ENCODE measurements at regions of chr4 and their contacts with region 1.

Region 1: GRCh38 chr4:56544573-56545131 is 39.1 kb downstream of the ARL9 start:
- DNase-seq: peak; percentile 69 to 83 (median 78)
- H3K4me3 ChIP-seq: peak overlapping the region; percentile 37 to 42
- H3K4me3 Mint-ChIP-seq: peak overlapping the region; percentile 43 to 77 (median 64)
- H3K27ac ChIP-seq: no peak overlapping the region
- H3K27ac Mint-ChIP-seq: peak overlapping the region in 6 of 7 donors; percentile 7 to 79 (median 22)
- H3K4me1 ChIP-seq: peaks cover 13% of the 10 kb centered on the region
- H3K4me1 Mint-ChIP-seq: peaks cover 8 to 19% (median 8%) of the 10 kb centered on the region in 4 donors
- H3K27me3 ChIP-seq: no peaks in the 10 kb centered on the region
- H3K27me3 Mint-ChIP-seq: peaks cover 4% of the 10 kb centered on the region in 2 donors

Region 2: GRCh38 chr4:56424697-56425514 is 119.7 kb before region 1 on chr4:
- CTCF ChIA-PET with region 1: interaction called, 101 read pairs
- POLR2A ChIA-PET with region 1: no interaction called
- intact Hi-C with region 1: loop called (anchors 1 kb)
- DNase-seq: peak in 4 of 5 donors; percentile 45 to 54 (median 48)
- H3K4me3 ChIP-seq: no peak overlapping the region
- H3K4me3 Mint-ChIP-seq: no peak overlapping the region
- H3K27ac ChIP-seq: no peak overlapping the region
- H3K27ac Mint-ChIP-seq: no peak overlapping the region
- H3K4me1 ChIP-seq: no peaks in the 10 kb centered on the region
- H3K4me1 Mint-ChIP-seq: peaks cover 0 to 7% (median 4%) of the 10 kb centered on the region in 4 donors
- H3K27me3 ChIP-seq: no peaks in the 10 kb centered on the region
- H3K27me3 Mint-ChIP-seq: no peaks in the 10 kb centered on the region

Region 3: DNA sequence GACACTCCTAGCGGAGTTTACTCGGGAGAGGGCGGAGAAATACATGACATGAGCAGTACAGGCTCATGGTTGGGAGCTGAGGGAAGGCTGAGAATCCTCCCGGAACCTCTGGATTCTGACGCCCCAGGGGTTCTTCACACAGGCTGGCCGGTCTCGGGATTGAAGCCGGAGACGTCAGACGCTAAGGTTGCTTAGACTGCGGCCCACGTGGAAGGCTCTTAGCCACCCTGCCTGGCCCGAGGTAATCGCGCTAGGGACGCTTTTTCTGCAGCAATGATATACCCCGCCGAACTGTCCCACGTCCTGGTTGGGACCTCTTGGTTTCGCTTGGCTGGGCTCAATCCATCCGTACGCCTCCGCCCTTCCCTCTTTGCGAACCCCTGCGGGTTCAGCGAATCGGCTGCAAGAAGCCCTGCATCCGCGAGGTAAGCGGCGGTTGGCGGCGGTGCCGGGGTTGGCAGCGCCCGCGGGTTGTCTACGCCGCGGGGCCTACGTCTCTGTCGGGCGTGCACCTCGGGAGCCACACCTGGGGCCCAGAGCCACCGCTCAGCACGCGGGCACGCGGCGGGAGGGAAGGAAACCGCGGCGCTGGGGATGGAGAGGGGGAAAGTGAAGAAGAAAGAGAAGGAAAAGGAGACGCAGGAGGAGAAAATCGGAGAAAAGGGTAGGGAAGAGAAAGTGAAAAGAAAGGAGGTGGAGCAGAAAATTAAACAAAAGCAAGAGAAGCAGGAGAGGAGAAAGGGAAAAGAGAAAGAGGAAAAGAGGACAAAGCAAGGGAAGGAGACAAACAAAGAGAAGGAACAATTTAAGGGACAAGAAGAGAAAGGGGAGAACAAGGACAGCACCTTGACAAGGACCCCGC is 39.2 kb before region 1 on chr4 and contains the start of gene ARL9:
- CTCF ChIA-PET with region 1: interaction called, 3 read pairs
- POLR2A ChIA-PET with region 1: no interaction called
- intact Hi-C with region 1: loop called (anchors 5 kb)
- DNase-seq: peak; percentile 56 to 74 (median 68)
- H3K4me3 ChIP-seq: peak within 1 kb of the TSS; percentile 28 to 42
- H3K4me3 Mint-ChIP-seq: peak within 1 kb of the TSS; percentile 77 to 91 (median 84)
- H3K27ac ChIP-seq: peak within 1 kb of the TSS; percentile 29
- H3K27ac Mint-ChIP-seq: peak within 1 kb of the TSS; percentile 2 to 94 (median 86)
- H3K4me1 ChIP-seq: peaks cover 10% of the 10 kb centered on the region
- H3K4me1 Mint-ChIP-seq: peaks cover 8 to 21% (median 11%) of the 10 kb centered on the region in 4 donors
- H3K27me3 ChIP-seq: no peaks in the 10 kb centered on the region
- H3K27me3 Mint-ChIP-seq: no peaks in the 10 kb centered on the region
- total RNA-seq, gene ARL9: 0.35 TPM in 1 of 2 experiments, not detected in the other

Region 4: GRCh38 chr4:56530269-56531148 is 14.1 kb before region 1 on chr4:
- CTCF ChIA-PET with region 1: interaction called, 16 read pairs
- POLR2A ChIA-PET with region 1: interaction called, 3 read pairs
- intact Hi-C with region 1: loop called (anchors 1 kb)
- DNase-seq: peak; percentile 60 to 80 (median 63)
- H3K4me3 ChIP-seq: peak overlapping the region; percentile 48 to 57
- H3K4me3 Mint-ChIP-seq: no peak overlapping the region
- H3K27ac ChIP-seq: no peak overlapping the region
- H3K27ac Mint-ChIP-seq: peak overlapping the region in 6 of 7 donors; percentile 14 to 69 (median 40)
- H3K4me1 ChIP-seq: peaks cover 11% of the 10 kb centered on the region
- H3K4me1 Mint-ChIP-seq: no peaks in the 10 kb centered on the region
- H3K27me3 ChIP-seq: no peaks in the 10 kb centered on the region
- H3K27me3 Mint-ChIP-seq: peaks cover 7 to 9% of the 10 kb centered on the region in 2 donors

Region 5: GRCh38 chr4:57147335-57148060 is 602.8 kb after region 1 on chr4:
- CTCF ChIA-PET with region 1: no interaction called
- POLR2A ChIA-PET with region 1: no interaction called
- intact Hi-C with region 1: no loop called
- DNase-seq: no peak
- H3K4me3 ChIP-seq: no peak overlapping the region
- H3K4me3 Mint-ChIP-seq: no peak overlapping the region
- H3K27ac ChIP-seq: no peak overlapping the region
- H3K27ac Mint-ChIP-seq: no peak overlapping the region
- H3K4me1 ChIP-seq: no peaks in the 10 kb centered on the region
- H3K4me1 Mint-ChIP-seq: no peaks in the 10 kb centered on the region
- H3K27me3 ChIP-seq: no peaks in the 10 kb centered on the region
- H3K27me3 Mint-ChIP-seq: peaks cover 5 to 8% of the 10 kb centered on the region in 2 donors

Measured in CD4-positive, alpha-beta memory T cell (primary cell).